ENCODE measurements at regions of chr22 and their contacts with region 1.

Region 1: DNA sequence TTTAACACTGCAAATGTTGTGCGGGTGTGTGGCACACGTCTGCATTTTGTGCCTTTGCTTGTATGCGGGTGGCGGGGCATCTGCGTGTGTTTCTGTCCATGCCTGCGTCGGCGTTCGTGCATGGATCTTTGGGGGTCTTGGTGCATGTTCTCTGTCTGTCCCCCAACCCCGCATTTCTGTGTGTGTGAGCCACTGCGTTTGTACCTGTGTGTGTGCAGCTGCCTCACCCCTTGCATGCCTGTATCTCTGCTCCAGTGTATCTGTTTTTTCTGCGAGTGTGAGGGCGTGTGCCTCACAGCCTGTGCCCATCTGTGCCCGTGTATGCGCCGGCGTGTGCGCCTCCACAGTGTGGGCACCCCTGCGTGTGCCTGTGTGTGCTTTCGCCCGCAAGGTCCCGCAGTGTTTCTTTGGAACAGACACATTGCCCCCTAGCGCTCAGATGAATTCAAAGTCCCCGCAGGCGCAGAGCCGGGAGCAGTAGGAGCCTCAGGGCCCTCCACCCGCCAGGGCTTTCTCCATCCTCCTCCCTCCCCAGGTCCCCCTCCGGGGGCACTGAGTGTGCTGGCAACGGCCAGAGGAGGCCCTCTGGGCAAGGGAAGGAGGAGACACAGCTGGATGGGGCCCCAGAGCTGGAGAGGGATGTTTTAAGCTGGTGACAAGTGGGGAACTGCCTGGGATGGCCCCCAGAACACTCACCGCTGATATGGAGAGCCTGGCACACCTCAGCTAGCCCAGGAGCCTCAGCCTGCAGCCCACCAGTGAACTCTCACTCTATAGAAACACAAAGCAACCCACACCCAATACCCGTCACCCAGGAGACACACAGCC is 3.1 kb upstream of the MN1 start:
- DNase-seq: peak in 1 of 2 donors; percentile 87
- H3K4me3 ChIP-seq: peak overlapping the region in 1 of 2 donors; percentile 21
- H3K27ac ChIP-seq: peak overlapping the region in 1 of 2 donors; percentile 92
- H3K4me1 ChIP-seq: peaks cover 11 to 34% of the 10 kb centered on the region in 2 donors
- H3K27me3 ChIP-seq: no peaks in the 10 kb centered on the region
- CTCF ChIP-seq: peak; percentile 68 to 77 (median 71)

Region 2: GRCh38 chr22:26756675-26757293 is 1047.9 kb before region 1 on chr22:
- intact Hi-C with region 1: loop called (anchors 2 kb)
- DNase-seq: peak in 1 of 2 donors; percentile 78
- H3K4me3 ChIP-seq: peak overlapping the region; percentile 51 to 52
- H3K27ac ChIP-seq: no peak overlapping the region
- H3K4me1 ChIP-seq: no peaks in the 10 kb centered on the region
- H3K27me3 ChIP-seq: no peaks in the 10 kb centered on the region
- CTCF ChIP-seq: peak; percentile 87 to 97 (median 93)

Region 3: GRCh38 chr22:27107824-27108223 is 696.9 kb before region 1 on chr22:
- intact Hi-C with region 1: loop called (anchors 5 kb)
- DNase-seq: peak; percentile 21 to 90
- H3K4me3 ChIP-seq: no peak overlapping the region
- H3K27ac ChIP-seq: peak overlapping the region; percentile 68 to 76
- H3K4me1 ChIP-seq: peaks cover 11 to 60% of the 10 kb centered on the region in 2 donors
- H3K27me3 ChIP-seq: no peaks in the 10 kb centered on the region
- CTCF ChIP-seq: no peak

Region 4: DNA sequence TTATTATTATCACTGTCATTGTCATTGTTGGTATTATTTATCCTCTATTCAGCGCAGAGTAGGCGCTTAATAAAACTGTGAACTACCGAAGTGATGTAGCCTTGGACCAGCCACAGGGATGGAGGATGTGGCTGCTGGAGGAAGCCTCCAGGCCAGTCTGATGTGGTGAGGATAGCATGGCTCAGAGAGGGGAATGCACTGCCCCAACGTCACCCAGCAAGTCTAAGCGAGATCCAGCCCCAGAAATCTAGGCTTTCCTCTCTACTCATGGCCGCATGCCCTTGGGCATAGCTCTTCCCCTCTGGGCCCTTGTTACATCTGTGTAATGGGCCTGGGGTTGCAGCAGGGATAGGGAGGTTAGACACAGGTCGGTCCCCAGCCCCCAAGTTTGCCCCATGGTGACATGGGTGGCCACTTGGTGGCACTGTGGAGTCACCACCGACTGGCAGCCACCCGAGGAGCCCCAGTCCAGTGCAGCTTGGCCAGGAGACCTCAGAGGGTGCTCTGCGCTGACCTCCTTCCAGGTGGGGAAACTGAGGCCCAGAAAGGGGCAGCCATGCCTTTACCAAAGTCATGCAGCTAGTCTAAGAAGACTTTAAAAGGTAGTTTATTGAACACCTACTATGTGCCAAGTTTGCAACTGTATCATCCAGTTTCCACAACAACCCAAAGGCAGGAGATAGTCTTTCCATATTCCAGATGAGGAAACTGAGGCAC is 398.9 kb before region 1 on chr22:
- intact Hi-C with region 1: loop called (anchors 2 kb)
- DNase-seq: peak in 1 of 2 donors; percentile 72
- H3K4me3 ChIP-seq: no peak overlapping the region
- H3K27ac ChIP-seq: no peak overlapping the region
- H3K4me1 ChIP-seq: no peaks in the 10 kb centered on the region
- H3K27me3 ChIP-seq: no peaks in the 10 kb centered on the region
- CTCF ChIP-seq: peak; percentile 65 to 78 (median 71)

Region 5: DNA sequence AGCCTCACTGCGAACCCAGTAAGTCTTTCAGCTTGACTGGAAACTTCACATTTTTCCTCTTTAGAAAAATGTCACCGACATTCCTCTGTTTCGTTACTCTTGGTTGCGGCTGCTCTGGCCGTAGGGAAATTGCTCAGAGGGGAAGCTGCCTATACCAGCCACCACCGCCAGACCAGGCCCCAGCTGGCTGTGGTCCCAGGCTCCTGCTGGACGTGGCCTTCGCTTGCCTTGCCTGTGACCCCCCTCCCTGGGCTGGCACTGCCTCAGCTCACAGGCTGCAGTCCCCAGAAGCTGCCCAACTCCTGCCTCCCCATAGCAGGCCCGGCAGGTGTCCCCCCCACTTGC is 200.9 kb before region 1 on chr22:
- intact Hi-C with region 1: loop called (anchors 5 kb)
- DNase-seq: peak in 1 of 2 donors; percentile 76
- H3K4me3 ChIP-seq: peak overlapping the region in 1 of 2 donors; percentile 24
- H3K27ac ChIP-seq: peak overlapping the region; percentile 71 to 78
- H3K4me1 ChIP-seq: peaks cover 4 to 17% of the 10 kb centered on the region in 2 donors
- H3K27me3 ChIP-seq: no peaks in the 10 kb centered on the region
- CTCF ChIP-seq: peak in 2 of 3 experiments; percentile 2 to 8

Region 6: GRCh38 chr22:27866132-27867086 is 61.7 kb after region 1 on chr22:
- intact Hi-C with region 1: no loop called
- DNase-seq: no peak
- H3K4me3 ChIP-seq: no peak overlapping the region
- H3K27ac ChIP-seq: peak overlapping the region; percentile 82 to 86
- H3K4me1 ChIP-seq: peaks cover 4 to 46% of the 10 kb centered on the region in 2 donors
- H3K27me3 ChIP-seq: no peaks in the 10 kb centered on the region
- CTCF ChIP-seq: no peak

Measured in ascending aorta (tissue), 2 donors.